Endothelial cell of umbilical vein (primary cell): ENCODE measurements at regions of chr11 and their contacts with region 1.

Region 1: GRCh38 chr11:77244243-77245027 is 57.1 kb downstream of the GDPD4 start:
- DNase-seq: peak; percentile 83
- H3K4me3 ChIP-seq: no peak overlapping the region
- H3K27ac ChIP-seq: peak overlapping the region; percentile 86
- H3K4me1 ChIP-seq: peaks cover 19% of the 10 kb centered on the region
- H3K27me3 ChIP-seq: no peaks in the 10 kb centered on the region
- CTCF ChIP-seq: no peak
- POLR2A ChIP-seq: no peak

Region 2: GRCh38 chr11:76974179-76974891 is 270.1 kb before region 1 on chr11:
- CTCF ChIA-PET with region 1: no interaction called
- POLR2A ChIA-PET with region 1: interaction called, 10 read pairs
- dilution Hi-C with region 1: no loop called
- intact Hi-C with region 1: no loop called
- DNase-seq: no peak
- H3K4me3 ChIP-seq: no peak overlapping the region
- H3K27ac ChIP-seq: no peak overlapping the region
- H3K4me1 ChIP-seq: no peaks in the 10 kb centered on the region
- H3K27me3 ChIP-seq: no peaks in the 10 kb centered on the region
- CTCF ChIP-seq: no peak
- POLR2A ChIP-seq: no peak

Region 3: DNA sequence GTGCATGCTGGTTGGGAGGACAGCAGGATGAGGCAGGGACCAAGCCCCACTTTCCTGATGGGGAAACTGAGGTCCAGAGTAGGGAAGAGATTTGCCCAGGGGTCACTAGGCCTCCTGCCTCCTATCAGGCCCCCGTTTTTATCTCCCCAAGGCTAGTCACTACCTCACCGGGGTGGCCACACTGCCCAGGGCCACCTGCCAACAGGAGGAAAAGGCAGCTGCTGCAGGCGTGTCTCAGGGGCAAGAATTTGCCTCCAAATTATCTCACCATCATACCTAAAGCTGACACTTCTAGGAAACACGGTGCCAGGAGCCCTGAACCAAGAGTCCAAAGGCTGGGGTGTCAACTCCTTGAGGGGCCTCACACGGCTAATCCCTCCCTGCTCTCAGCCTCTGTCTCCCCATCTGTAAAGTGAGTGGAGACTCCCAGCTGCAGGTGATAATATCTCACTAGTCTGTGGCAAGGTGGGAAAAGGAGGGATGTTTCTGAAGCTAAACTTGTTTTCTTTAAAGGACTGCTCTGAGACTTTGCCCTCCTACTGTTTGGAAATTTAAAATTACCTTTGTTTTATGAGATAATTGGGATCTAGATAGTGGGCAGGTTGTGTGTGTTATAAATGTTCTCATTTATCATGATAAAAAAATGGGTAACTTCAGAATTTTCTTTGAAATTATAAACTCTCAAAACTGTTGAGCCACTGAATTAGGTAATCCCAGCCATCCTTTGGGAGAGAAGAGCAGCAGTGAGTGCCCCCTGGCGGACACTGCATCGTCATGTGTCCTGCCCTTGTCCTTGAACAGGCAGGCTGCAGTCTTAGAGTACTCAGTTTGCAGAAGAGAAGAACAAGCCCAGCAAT is 56.4 kb before region 1 on chr11:
- CTCF ChIA-PET with region 1: no interaction called
- POLR2A ChIA-PET with region 1: no interaction called
- dilution Hi-C with region 1: no loop called
- intact Hi-C with region 1: no loop called
- DNase-seq: peak; percentile 75
- H3K4me3 ChIP-seq: no peak overlapping the region
- H3K27ac ChIP-seq: no peak overlapping the region
- H3K4me1 ChIP-seq: no peaks in the 10 kb centered on the region
- H3K27me3 ChIP-seq: no peaks in the 10 kb centered on the region
- CTCF ChIP-seq: peak; percentile 81 to 94
- POLR2A ChIP-seq: no peak